HepG2 (cell line): ENCODE measurements at regions of chr14 and their contacts with region 1.

Region 1: GRCh38 chr14:53306267-53306721 is 153.2 kb upstream of the DDHD1 start:
- DNase-seq: peak; percentile 19
- ATAC-seq: peak; percentile 72
- H3K4me3 ChIP-seq: peak overlapping the region; percentile 57 to 80 (median 74)
- H3K27ac ChIP-seq: no peak overlapping the region
- H3K4me1 ChIP-seq: peaks cover 9% of the 10 kb centered on the region
- H3K27me3 ChIP-seq: peaks cover 1 to 3% of the 10 kb centered on the region in 2 experiments; a peak in 3 of 5 replicates
- CTCF ChIP-seq: peak; percentile 80
- EP300 ChIP-seq: no peak
- POLR2A ChIP-seq: no peak
- RAD21 ChIP-seq: no peak

Region 2: DNA sequence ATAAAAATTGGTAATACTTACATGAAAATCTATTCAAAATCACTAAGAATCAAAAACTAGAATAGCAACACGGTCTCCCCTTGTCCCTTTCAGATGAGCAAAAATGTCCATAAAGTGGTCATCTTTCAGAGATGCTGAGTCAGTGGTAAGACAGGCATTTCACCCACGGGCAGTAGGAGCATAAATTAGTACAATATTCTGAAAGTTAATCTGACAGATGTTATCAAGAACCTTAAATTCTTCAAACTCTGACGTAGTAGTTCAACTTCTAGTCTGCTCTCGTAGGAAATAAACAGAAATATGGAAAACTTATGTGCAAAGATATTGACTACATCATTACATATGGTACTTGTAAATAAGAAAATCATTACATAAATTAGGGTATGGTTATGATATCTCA is 481.8 kb before region 1 on chr14:
- CTCF ChIA-PET with region 1: no interaction called
- POLR2A ChIA-PET with region 1: no interaction called
- in situ Hi-C with region 1: no loop called
- intact Hi-C with region 1: loop called (anchors 5 kb)
- DNase-seq: no peak
- ATAC-seq: no peak
- H3K4me3 ChIP-seq: no peak overlapping the region
- H3K27ac ChIP-seq: no peak overlapping the region
- H3K4me1 ChIP-seq: peaks cover 68% of the 10 kb centered on the region
- H3K27me3 ChIP-seq: no peaks in the 10 kb centered on the region
- CTCF ChIP-seq: no peak
- EP300 ChIP-seq: no peak
- POLR2A ChIP-seq: no peak
- RAD21 ChIP-seq: no peak

Region 3: DNA sequence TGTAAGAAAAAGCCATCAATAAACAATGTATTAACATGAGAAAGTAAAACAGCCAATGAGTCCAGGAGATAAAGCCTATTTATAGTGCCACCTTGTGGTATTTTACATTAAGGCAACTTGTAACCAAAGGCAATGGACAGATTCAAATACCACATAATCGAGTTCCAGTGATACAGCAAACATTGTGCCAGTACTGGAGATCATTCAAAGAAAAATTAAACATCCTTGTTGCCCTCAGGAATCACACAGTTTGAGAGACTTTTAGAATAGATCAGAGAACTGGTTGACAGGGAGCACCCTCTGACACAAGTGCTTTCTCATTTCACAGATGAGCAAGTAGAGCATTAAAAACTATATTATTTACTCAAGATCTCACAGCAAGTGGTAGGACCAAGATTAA is 251.3 kb before region 1 on chr14:
- CTCF ChIA-PET with region 1: no interaction called
- POLR2A ChIA-PET with region 1: no interaction called
- in situ Hi-C with region 1: no loop called
- intact Hi-C with region 1: loop called (anchors 10 kb)
- DNase-seq: peak; percentile 38
- ATAC-seq: peak; percentile 65
- H3K4me3 ChIP-seq: no peak overlapping the region
- H3K27ac ChIP-seq: no peak overlapping the region
- H3K4me1 ChIP-seq: no peaks in the 10 kb centered on the region
- H3K27me3 ChIP-seq: no peaks in the 10 kb centered on the region
- CTCF ChIP-seq: peak; percentile 78
- EP300 ChIP-seq: no peak
- POLR2A ChIP-seq: no peak
- RAD21 ChIP-seq: peak; percentile 35; the same call in 1 of the 2 replicates

Region 4: DNA sequence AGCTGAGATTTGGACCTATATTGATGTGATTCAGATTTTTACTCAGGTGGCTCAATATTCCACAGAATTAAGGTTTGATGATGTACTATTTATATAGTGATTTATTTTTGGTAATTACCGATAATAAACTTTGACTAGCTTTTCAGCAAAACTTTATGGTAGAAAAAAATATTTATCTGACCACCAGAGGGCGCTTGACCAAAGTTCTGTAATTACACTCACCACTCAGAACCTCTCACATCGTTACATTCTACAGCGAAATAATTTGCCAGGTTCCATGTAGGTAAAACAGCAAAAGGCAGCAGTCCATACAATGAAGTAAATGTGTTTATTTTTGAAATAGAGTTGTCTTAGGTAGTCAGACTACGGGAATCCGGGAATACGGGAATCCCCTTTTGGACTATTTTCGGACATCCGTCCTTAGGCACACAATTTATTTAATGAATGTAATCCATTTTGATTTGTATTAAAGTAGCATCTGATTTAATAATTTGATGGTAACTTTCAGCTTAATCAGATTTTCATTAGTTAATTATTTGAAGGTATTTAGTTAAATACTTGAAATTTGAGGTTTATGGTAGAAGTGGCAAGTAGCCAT is 10.2 kb before region 1 on chr14:
- CTCF ChIA-PET with region 1: interaction called, 3 read pairs
- POLR2A ChIA-PET with region 1: no interaction called
- in situ Hi-C with region 1: no loop called
- intact Hi-C with region 1: loop called (anchors 1 kb)
- DNase-seq: peak; percentile 17
- ATAC-seq: no peak
- H3K4me3 ChIP-seq: no peak overlapping the region
- H3K27ac ChIP-seq: no peak overlapping the region
- H3K4me1 ChIP-seq: no peaks in the 10 kb centered on the region
- H3K27me3 ChIP-seq: peaks cover 0 to 18% of the 10 kb centered on the region in 2 experiments; a peak in 1 of 5 replicates
- CTCF ChIP-seq: peak; percentile 57
- EP300 ChIP-seq: no peak
- POLR2A ChIP-seq: no peak
- RAD21 ChIP-seq: no peak